BJ (cell line): ENCODE measurements at regions of chr11 and their contacts with region 1.

Region 1: DNA sequence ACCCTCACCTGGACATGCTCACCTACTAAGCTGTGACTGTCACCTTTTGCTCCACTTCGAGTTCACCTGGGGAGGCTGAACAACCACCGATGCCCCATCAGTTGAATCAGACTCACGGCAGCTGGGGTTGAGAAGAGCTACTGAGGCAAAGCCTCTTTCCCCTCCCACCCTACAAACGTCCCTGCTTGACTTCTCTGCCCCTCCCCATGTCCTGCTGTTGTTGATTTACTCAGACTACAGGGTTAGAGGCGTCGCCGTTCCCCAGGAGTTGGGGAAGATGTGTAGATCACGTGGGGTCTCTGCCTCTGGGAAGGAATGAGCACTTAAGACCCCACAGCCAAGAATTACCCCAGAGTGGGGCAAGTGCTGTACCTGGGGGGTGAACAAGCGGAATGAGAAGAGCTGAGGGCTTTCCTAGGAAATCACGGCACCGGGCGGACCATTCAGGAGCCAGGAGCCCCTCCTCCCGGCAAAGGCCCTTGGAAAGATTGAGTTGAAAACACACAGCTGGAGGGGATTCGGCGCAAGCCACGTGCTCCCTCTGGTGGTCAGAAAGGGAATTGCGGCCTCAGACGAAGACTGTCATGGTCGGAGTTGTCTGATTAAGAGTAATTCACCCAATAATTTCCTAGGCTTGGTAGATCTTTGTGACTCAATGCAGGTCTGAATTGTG is 7.0 kb downstream of the FXYD2 start:
- DNase-seq: peak; percentile 4
- H3K4me3 ChIP-seq: no peak overlapping the region
- H3K27me3 ChIP-seq: no peaks in the 10 kb centered on the region
- CTCF ChIP-seq: peak; percentile 99

Region 2: GRCh38 chr11:117828611-117829368 is 11.3 kb after region 1 on chr11:
- CTCF ChIA-PET with region 1: interaction called, 26 read pairs
- POLR2A ChIA-PET with region 1: no interaction called
- DNase-seq: no peak
- H3K4me3 ChIP-seq: no peak overlapping the region
- H3K27me3 ChIP-seq: peaks cover 2% of the 10 kb centered on the region
- CTCF ChIP-seq: no peak